ENCODE measurements at regions of chr2 and their contacts with region 1.

Region 1: DNA sequence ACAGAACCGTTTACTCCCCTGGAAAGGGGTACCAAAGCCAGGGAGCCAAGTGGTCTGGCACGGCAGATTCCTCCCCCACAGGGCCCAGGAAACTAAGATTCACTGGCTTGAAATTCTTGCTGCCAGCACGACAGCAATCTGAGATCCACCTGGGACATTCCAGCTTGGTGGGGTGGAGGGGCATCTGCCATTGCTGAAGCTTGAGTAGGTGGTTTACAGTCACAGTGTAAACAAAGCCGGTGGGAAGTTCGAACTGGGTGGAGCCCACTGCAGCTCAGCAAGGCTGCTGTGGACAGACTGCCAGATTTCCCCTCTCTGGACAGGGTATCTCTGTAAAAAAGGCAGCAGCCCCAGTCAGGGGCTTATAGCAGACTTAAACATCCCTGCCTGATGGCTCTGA is 901.7 kb upstream of the LRRTM1 start:
- DNase-seq: no peak
- H3K4me3 Mint-ChIP-seq: no peak overlapping the region
- H3K27ac Mint-ChIP-seq: no peak overlapping the region
- H3K4me1 Mint-ChIP-seq: no peaks in the 10 kb centered on the region
- H3K27me3 Mint-ChIP-seq: no peaks in the 10 kb centered on the region
- CTCF ChIP-seq: no peak

Region 2: DNA sequence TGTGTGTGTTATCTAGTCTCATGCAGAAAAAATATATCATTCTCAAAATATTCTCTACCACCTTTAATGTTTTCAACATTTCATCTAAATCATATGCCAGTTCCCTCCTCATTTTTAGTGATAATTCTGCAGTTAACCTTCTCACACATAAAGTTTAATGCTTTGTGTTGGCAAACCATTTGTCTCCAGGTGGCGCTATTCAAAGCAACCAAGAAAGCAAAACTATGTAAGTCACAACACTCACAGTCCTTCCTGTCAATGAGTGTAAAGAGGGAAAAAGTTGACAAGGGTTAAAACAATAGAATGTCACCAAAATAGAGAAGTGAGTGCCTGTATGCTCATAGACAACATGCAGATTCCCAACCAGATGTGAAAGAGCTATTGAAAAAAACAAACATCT is 59.9 kb after region 1 on chr2:
- CTCF ChIA-PET with region 1: no interaction called
- intact Hi-C with region 1: loop called (anchors 10 kb)
- DNase-seq: peak; percentile 2
- H3K4me3 Mint-ChIP-seq: no peak overlapping the region
- H3K27ac Mint-ChIP-seq: no peak overlapping the region
- H3K4me1 Mint-ChIP-seq: peaks cover 6% of the 10 kb centered on the region
- H3K27me3 Mint-ChIP-seq: no peaks in the 10 kb centered on the region
- CTCF ChIP-seq: peak; percentile 24